ENCODE measurements at regions of chr16 and their contacts with region 1.

Region 1: GRCh38 chr16:67883872-67884261 is 818 bp upstream of the NRN1L start:
- DNase-seq: peak; percentile 80
- H3K4me3 Mint-ChIP-seq: no peak overlapping the region
- H3K27ac Mint-ChIP-seq: peak overlapping the region; percentile 45
- H3K4me1 Mint-ChIP-seq: no peaks in the 10 kb centered on the region
- H3K27me3 Mint-ChIP-seq: no peaks in the 10 kb centered on the region

Region 2: DNA sequence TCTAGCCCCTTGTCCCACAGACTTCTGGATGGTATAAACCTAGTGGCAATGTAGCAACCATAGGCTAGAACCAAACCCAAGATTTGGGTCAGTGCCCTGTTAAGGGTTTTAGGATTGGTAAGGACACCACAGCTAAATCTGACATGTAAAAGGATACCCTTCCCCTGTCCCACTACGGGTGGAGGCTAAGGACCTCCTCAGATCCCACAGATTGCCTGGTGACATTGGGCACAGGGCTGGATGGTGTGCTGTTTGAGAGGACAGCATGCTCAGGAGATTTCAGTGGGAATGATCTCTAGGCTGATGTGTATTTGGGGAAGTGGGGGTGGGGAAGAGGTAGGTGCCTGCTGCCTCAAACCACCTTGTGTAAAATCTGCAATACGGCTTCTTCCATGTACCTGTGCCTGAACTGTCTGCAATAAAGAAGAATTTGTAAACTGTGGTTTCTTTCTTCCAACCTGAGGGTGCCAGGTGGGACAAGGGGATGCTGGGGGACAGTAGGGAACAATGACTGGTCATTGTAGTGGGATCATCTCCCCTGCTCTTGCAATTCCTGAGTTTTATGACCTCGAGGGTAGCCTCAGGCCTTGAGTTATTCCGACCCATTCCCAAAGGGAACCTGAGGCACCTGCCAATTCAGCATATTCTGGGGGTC is 11.6 kb before region 1 on chr16:
- CTCF ChIA-PET with region 1: interaction called, 16 read pairs
- DNase-seq: no peak
- H3K4me3 Mint-ChIP-seq: peak overlapping the region; percentile 91
- H3K27ac Mint-ChIP-seq: peak overlapping the region; percentile 90
- H3K4me1 Mint-ChIP-seq: peaks cover 34% of the 10 kb centered on the region
- H3K27me3 Mint-ChIP-seq: no peaks in the 10 kb centered on the region

Region 3: DNA sequence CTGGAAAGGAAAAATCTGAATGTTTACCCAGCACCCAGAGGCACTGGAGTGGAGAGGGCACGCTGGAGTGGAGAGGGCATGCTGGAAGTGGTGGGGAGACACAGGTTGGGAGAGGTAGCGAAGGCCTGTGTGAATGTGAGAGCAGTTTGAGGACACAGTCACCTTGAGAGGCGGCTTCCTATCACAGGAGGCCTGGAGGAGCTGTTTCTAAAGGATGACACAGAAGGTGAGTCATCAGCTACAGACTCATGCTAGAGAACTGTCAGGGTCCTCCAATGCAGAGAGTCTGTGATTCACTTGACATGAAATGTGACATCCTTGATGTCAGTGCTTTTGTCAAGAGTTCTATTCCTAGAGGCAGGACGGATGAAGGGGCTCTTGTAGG is 34.0 kb after region 1 on chr16:
- CTCF ChIA-PET with region 1: interaction called, 39 read pairs
- DNase-seq: no peak
- H3K4me3 Mint-ChIP-seq: no peak overlapping the region
- H3K27ac Mint-ChIP-seq: no peak overlapping the region
- H3K4me1 Mint-ChIP-seq: peaks cover 14% of the 10 kb centered on the region
- H3K27me3 Mint-ChIP-seq: no peaks in the 10 kb centered on the region

Region 4: GRCh38 chr16:67935402-67936123 is 51.7 kb after region 1 on chr16:
- CTCF ChIA-PET with region 1: interaction called, 49 read pairs
- DNase-seq: peak; percentile 98
- H3K4me3 Mint-ChIP-seq: peak overlapping the region; percentile 98
- H3K27ac Mint-ChIP-seq: peak overlapping the region; percentile 95
- H3K4me1 Mint-ChIP-seq: peaks cover 46% of the 10 kb centered on the region
- H3K27me3 Mint-ChIP-seq: no peaks in the 10 kb centered on the region

Region 5: DNA sequence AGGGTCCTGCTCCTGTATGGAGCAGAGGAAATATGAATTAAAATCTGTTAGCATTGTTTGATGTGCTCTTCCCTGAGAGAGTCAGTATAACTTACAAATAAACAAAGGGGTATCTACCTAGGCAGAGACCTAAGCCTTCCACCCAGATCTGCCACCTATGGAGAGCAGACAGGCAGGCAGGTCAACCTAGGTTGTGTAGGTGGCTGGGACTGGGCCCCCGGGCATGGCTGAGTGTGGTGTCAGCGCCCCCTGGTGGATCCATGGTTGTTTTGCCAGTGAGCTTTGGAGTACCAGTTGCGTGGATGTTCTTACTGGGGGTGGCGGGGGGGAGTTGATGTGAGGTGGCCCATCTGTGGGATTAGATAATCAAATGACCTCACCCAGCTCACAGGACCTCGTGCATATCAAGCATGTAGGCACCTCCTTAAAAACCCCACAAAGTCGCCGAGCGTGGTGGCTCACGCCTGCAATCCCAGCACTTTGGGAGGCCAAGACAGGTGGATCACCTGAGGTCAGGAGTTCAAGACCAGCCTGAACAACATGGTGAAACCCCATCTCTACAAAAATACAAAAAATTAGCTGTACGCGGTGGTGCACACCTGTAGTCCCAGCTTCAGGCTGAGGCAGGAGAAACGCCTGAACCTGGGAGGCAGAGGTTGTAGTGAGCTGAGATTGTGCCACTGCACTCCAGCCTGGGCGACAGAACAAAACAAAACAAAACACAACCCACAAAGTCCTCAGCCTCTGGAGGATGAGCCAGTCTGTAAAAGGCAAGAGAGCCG is 156.8 kb after region 1 on chr16:
- CTCF ChIA-PET with region 1: interaction called, 18 read pairs
- DNase-seq: peak; percentile 94
- H3K4me3 Mint-ChIP-seq: no peak overlapping the region
- H3K27ac Mint-ChIP-seq: peak overlapping the region; percentile 76
- H3K4me1 Mint-ChIP-seq: peaks cover 23% of the 10 kb centered on the region
- H3K27me3 Mint-ChIP-seq: no peaks in the 10 kb centered on the region